Kidney (tissue), 22 donors: ENCODE measurements at regions of chr1 and their contacts with region 1.

Region 1: DNA sequence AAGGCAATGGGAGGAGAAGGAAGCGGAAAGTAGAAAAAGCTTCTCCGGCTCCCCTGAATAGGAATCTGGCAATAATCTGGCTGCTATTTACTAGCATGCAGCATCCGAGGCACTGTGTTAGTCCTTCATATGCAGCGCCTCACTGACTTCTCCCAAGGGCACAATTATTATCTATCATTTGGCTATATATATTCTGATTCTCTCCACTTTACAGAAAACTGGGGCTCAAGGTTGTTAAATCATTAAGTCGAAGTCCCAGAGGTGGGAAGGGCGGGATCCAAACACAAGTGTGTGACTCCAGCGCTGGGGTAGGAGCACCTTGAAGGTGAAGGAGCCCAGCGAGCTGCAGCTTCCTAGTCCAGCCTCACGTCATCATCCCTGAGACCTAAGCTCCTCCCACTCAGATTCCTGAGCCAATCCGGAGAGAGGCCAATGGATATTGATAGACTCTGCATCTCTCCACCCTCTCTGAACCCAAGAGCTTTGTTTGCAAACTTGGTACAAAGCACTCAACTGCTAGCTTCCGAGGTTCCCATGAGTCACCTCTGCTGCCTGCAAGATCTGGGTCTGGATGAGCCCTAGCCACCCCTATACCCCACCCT is 16.6 kb upstream of the EYA3 start:
- DNase-seq: peak in 4 of 5 donors; percentile 26 to 62 (median 56)
- H3K4me3 ChIP-seq: peak overlapping the region in 2 of 3 donors; percentile 8 to 33
- H3K27ac ChIP-seq: peak overlapping the region; percentile 15 to 52
- H3K4me1 ChIP-seq: no peaks in the 10 kb centered on the region
- H3K27me3 ChIP-seq: no peaks in the 10 kb centered on the region
- CTCF ChIP-seq: no peak

Region 2: DNA sequence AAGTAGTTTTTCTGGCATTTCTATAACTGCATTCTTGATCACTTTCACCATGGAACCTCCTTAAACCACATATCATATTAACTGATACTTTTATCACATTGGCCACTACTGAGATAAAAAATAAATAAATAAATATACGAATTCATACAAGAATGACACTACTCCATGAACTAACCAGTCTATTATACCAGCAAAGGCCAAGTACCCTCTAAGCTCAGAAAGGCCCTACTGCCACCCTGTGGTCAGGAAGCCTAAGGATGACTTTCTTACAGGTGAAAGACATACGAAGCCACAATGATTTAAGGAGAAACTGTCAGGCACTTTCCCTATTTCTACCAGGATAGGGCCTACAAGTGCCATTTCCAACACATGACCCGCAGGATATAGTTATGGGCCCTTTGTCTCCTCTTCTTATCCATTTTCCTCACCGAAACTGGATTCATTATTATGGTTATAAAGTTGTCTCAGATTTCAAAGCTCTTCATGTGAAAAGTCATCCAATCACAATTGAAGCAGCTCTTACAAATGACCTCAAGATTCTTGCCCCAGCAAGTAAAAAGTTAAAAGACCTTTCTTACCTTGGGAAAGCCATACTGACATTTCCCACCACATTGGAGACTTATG is 104.0 kb after region 1 on chr1:
- intact Hi-C with region 1: loop called (anchors 10 kb)
- DNase-seq: peak in 3 of 5 donors; percentile 57 to 80 (median 66)
- H3K4me3 ChIP-seq: no peak overlapping the region
- H3K27ac ChIP-seq: no peak overlapping the region
- H3K4me1 ChIP-seq: no peaks in the 10 kb centered on the region
- H3K27me3 ChIP-seq: no peaks in the 10 kb centered on the region
- CTCF ChIP-seq: peak; percentile 70